Activated CD8-positive, alpha-beta T cell treated with anti-CD3 and anti-CD28 coated beads for 36 hours (primary cell): ENCODE measurements at regions of chrX and their contacts with region 1.

Region 1: DNA sequence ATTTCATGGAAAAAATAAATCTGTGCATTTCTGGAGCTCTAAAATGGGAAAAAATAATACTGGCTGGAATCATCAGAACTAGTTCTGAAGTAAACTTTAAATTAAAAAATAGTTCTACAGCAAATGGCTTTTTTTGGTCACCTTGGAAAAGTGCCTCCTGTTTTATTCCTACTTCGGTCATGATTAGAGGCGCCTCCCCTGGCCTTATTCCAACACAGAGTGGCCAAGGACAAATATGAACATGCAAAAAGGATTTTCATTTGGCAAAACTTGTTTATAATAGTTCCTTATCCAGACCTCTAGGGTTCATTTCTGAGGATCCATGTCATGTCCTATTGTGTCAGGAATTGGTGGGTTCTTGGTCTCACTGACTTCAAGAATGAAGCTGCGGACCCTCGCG is 11.1 kb upstream of the KLF8 start:
- DNase-seq: no peak
- ATAC-seq: no peak
- H3K4me3 Mint-ChIP-seq: no peak overlapping the region
- H3K27ac Mint-ChIP-seq: no peak overlapping the region
- H3K4me1 Mint-ChIP-seq: no peaks in the 10 kb centered on the region
- H3K27me3 Mint-ChIP-seq: no peaks in the 10 kb centered on the region
- CTCF ChIP-seq: no peak

Region 2: DNA sequence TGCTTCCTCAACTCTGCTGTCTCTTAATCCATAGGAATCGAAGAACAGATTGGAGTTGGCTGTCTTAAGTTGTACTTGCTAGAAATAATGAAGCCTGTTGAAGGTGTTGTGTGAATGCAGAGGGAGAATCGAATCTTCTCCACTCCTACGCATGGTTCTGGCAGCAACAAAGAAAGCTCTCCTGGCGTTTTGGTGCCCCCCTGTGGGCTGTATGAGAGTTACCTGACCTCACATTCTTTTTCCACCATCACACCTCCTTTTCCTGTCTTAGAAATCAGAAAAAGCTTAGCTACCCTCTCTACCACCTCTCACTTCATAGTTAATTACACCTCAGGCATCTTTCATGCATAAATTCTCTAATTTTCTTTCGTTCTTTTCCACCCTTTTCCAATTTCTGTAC is 27.4 kb after region 1 on chrX:
- CTCF ChIA-PET with region 1: interaction called, 14 read pairs
- POLR2A ChIA-PET with region 1: no interaction called
- intact Hi-C with region 1: no loop called
- DNase-seq: peak; percentile 69
- ATAC-seq: peak; percentile 64
- H3K4me3 Mint-ChIP-seq: no peak overlapping the region
- H3K27ac Mint-ChIP-seq: no peak overlapping the region
- H3K4me1 Mint-ChIP-seq: peaks cover 3% of the 10 kb centered on the region
- H3K27me3 Mint-ChIP-seq: no peaks in the 10 kb centered on the region
- CTCF ChIP-seq: peak; percentile 66

Region 3: DNA sequence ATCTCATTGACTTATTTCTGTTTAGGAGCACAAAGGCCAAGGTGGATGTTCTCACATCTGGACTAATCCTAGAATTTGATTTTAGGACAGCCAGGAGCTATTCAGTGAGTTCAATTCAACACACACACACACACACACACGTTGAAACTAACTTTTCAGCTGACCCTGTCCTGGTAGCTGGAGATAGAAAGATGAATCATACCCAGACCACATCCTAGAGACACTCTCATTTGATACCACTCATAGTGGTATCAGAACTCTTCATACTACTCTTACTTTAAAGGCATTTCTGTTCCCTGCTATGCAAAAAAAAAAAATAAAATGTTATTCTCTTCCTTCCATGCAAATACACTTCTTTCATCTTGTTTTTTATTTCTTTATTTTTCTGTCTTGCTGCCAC is 47.8 kb after region 1 on chrX:
- CTCF ChIA-PET with region 1: no interaction called
- POLR2A ChIA-PET with region 1: no interaction called
- intact Hi-C with region 1: no loop called
- DNase-seq: no peak
- ATAC-seq: peak; percentile 77
- H3K4me3 Mint-ChIP-seq: no peak overlapping the region
- H3K27ac Mint-ChIP-seq: no peak overlapping the region
- H3K4me1 Mint-ChIP-seq: peaks cover 10% of the 10 kb centered on the region
- H3K27me3 Mint-ChIP-seq: no peaks in the 10 kb centered on the region
- CTCF ChIP-seq: no peak

Region 4: GRCh38 chrX:56623316-56623715 is 402.2 kb after region 1 on chrX:
- CTCF ChIA-PET with region 1: no interaction called
- POLR2A ChIA-PET with region 1: no interaction called
- intact Hi-C with region 1: no loop called
- DNase-seq: no peak
- ATAC-seq: no peak
- H3K4me3 Mint-ChIP-seq: no peak overlapping the region
- H3K27ac Mint-ChIP-seq: no peak overlapping the region
- H3K4me1 Mint-ChIP-seq: no peaks in the 10 kb centered on the region
- H3K27me3 Mint-ChIP-seq: no peaks in the 10 kb centered on the region
- CTCF ChIP-seq: no peak